Colonic mucosa (tissue), 4 donors: ENCODE measurements at regions of chr6 and their contacts with region 1.

Region 1: DNA sequence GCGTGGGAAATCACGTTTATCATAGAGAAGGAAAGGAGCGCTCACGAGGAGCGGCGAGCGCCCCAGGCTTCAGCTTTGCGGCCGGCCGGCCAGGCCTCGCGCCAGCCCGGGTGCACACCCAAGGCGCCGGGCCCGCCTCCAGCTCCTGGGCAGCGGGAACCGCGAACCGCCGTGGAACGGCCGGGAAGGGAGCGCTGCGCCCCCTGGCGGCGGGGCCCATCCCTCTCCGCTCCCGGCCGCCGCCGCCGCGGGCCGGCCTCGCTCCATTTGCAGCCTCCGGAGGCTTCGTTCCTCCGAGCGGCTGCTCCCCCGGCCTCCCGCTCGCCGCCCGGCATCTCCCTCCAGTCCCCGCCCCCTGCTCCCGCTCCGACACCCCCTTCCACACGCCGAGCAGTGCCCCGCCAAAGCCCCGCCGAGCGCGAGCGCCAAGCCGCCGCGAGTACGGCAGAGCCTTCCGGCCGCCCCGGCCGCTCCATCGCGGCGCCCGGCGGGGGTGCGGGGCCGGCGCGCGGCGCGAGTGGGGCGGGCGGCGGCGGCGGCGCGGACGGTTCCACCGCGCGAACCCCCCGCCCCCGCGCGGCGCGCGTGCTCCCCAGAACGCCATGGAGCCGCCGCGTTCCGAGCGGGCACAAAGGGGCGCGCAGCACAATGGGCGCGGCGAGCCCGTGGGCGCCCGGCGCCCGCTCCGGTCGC is 956 bp downstream of the BEND3 start:
- DNase-seq: peak; percentile 84
- H3K4me3 ChIP-seq: peak overlapping the region; percentile 75
- H3K27ac ChIP-seq: peak overlapping the region; percentile 70
- H3K4me1 ChIP-seq: peaks cover 4% of the 10 kb centered on the region
- H3K27me3 ChIP-seq: no peaks in the 10 kb centered on the region
- CTCF ChIP-seq: peak; percentile 87

Region 2: DNA sequence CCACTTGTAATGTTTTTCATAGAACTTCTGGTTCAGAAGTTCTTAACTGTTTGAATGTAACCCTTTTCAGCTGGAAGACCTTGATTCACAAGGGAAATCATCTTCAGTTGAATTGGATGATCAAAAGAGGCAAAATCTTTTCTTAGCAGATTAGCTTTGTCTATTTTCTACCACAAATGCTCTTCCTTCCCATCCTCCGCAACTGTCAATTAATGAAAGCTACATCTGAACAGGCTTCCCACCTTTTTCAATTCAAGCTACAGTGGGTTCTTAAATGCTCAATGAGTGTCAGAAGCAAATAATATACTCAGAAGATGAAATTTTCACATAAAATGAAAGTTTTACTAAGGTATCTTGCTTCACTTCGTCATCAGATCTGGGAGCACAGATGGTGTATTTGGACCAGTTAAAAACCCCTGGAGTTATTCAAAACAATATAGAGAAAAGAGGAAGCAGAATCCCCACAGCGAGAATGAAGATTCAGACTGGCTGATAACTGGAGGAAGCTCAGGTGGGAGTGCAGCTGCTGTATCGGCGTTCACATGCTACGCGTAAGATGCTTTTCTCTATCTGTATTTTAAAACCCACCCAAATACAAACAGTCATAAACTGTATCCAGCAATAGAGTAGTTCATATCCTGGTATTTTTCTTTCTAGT is 465.6 kb before region 1 on chr6:
- intact Hi-C with region 1: no loop called
- DNase-seq: no peak
- H3K4me3 ChIP-seq: no peak overlapping the region
- H3K27ac ChIP-seq: no peak overlapping the region
- H3K4me1 ChIP-seq: no peaks in the 10 kb centered on the region
- H3K27me3 ChIP-seq: no peaks in the 10 kb centered on the region
- CTCF ChIP-seq: no peak

Region 3: GRCh38 chr6:107033126-107033525 is 81.2 kb before region 1 on chr6:
- intact Hi-C with region 1: loop called (anchors 2 kb)
- DNase-seq: no peak
- H3K4me3 ChIP-seq: no peak overlapping the region
- H3K27ac ChIP-seq: no peak overlapping the region
- H3K4me1 ChIP-seq: no peaks in the 10 kb centered on the region
- H3K27me3 ChIP-seq: no peaks in the 10 kb centered on the region
- CTCF ChIP-seq: no peak

Region 4: DNA sequence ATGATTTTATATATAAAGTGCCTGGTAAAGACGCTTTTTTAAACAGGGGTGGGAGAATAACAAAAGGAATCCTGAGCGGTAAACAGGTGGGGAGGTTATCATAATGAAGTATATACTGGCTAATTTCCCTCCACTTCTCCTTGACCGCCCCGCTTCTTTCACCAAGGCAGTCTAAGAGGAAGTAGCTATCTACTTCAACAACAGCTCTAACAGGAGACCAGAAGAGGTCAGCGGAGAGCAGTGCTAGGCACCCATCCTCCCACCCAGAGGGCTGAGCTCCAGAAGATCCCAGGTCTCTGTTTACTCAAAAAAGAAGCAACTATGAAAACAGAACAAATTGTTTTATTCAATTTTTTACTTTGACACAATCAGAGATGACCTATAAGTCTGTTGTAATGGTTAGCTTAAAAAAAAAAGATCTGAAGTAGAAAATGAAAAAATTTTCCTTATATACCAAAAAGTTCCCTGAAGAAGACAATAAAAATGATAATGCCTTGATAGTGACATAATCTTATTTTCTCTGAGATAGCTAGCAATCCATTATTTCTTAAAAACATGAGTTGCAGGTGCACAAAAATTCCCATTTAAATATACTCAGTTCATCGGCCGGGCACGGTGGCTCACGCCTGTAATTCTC is 203.9 kb after region 1 on chr6:
- intact Hi-C with region 1: no loop called
- DNase-seq: peak; percentile 55
- H3K4me3 ChIP-seq: no peak overlapping the region
- H3K27ac ChIP-seq: no peak overlapping the region
- H3K4me1 ChIP-seq: no peaks in the 10 kb centered on the region
- H3K27me3 ChIP-seq: no peaks in the 10 kb centered on the region
- CTCF ChIP-seq: peak; percentile 53